ENCODE measurements at regions of chr1 and their contacts with region 1.

Region 1: GRCh38 chr1:26363549-26364448 is 8.8 kb downstream of the ZNF683 start:
- DNase-seq: peak; percentile 57 to 59
- ATAC-seq: peak; percentile 73 to 90; a peak in 5 of 6 replicates
- H3K4me3 ChIP-seq: no peak overlapping the region
- H3K27ac ChIP-seq: peak overlapping the region in 1 of 2 experiments; percentile 47; a peak in 2 of 6 replicates
- H3K4me1 ChIP-seq: peaks cover 8% of the 10 kb centered on the region; the same call in 2 of the 3 replicates
- CTCF ChIP-seq: peak; percentile 81
- EP300 ChIP-seq: no peak
- POLR2A ChIP-seq: no peak
- RAD21 ChIP-seq: peak; percentile 71 to 76

Region 2: DNA sequence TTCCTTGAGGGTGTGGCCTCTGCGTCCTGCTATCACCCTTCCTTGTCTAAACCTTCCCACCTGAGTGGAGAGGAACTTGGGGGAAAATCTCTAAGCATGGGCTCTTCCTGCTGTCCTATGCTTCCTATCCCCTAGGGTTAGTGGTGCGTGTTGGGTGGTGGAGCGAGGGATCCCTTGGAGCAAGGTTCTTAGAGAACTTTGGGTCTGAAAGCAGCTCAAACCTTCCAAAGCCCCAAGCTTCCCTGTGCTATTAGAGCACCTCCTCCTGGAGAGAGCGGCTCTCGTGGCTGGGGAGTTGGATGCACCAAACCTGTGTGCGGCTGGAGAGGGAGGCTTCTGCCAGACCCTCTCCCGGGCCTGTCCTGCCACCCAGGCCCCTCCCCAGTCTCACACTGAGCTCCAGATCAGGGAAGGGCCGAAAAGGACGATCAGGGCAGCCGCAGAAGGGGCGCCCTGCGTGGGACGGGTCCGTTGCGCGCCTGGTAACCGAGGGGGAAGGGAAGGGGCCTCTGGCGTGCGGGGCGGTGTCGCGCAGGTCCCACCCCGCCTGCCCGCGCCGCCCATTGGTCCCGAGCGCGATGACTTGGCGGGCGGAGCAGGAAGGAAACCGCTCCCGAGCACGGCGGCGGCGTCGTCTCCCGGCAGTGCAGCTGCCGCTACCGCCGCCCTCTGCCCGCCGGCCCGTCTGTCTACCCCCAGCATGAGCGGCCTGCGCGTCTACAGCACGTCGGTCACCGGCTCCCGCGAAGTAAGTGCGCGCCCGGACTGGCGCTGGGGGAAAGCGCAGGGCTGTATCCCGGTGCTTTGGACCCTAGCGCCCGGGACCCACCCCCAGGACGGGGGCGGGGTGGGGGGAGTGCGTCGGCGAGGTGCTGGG is 84.1 kb before region 1 on chr1 and contains the start of gene SH3BGRL3:
- CTCF ChIA-PET with region 1: interaction called, 32 read pairs
- POLR2A ChIA-PET with region 1: no interaction called
- DNase-seq: peak; percentile 73 to 75
- ATAC-seq: peak; percentile 82 to 90
- H3K4me3 ChIP-seq: peak within 1 kb of the TSS; percentile 98
- H3K27ac ChIP-seq: peak within 1 kb of the TSS; percentile 99
- H3K4me1 ChIP-seq: peaks cover 50% of the 10 kb centered on the region
- CTCF ChIP-seq: peak; percentile 41
- EP300 ChIP-seq: no peak
- POLR2A ChIP-seq: peak; percentile 77
- RAD21 ChIP-seq: no peak
- polyA plus RNA-seq, gene SH3BGRL3: 36.1 and 38.7 TPM in 2 replicates

Region 3: GRCh38 chr1:26284597-26285360 is 79.0 kb before region 1 on chr1:
- CTCF ChIA-PET with region 1: interaction called, 32 read pairs
- POLR2A ChIA-PET with region 1: no interaction called
- DNase-seq: peak; percentile 64
- ATAC-seq: peak; percentile 67 to 82
- H3K4me3 ChIP-seq: no peak overlapping the region
- H3K27ac ChIP-seq: peak overlapping the region in 1 of 2 experiments; percentile 64; a peak in 3 of 6 replicates
- H3K4me1 ChIP-seq: peaks cover 23% of the 10 kb centered on the region
- CTCF ChIP-seq: peak; percentile 63
- EP300 ChIP-seq: no peak
- POLR2A ChIP-seq: no peak
- RAD21 ChIP-seq: peak; percentile 69

Region 4: DNA sequence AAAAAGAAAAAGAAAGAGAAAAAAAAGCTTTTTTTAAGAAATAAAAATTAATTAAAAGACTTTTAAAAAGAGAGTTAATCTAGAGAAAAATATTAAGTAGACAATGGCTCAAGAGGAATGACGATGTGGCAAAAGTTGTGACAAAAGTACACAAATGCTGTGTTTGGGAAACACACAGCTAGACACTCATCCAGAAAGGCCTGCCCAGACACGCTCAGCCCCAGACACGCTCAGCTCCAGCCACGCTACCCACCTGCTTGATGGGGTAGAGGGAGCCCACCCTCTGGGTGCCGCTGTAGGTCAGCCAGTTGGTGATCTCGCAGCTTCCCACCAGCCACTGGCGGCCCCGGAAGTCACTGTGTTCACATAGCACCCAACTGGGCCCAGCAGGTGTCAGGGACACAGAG is 35.8 kb before region 1 on chr1:
- CTCF ChIA-PET with region 1: interaction called, 20 read pairs
- POLR2A ChIA-PET with region 1: no interaction called
- DNase-seq: no peak
- ATAC-seq: no peak
- H3K4me3 ChIP-seq: no peak overlapping the region
- H3K27ac ChIP-seq: no peak overlapping the region
- H3K4me1 ChIP-seq: peaks cover 6% of the 10 kb centered on the region; the same call in 2 of the 3 replicates
- CTCF ChIP-seq: no peak
- EP300 ChIP-seq: no peak
- POLR2A ChIP-seq: no peak
- RAD21 ChIP-seq: no peak

Region 5: DNA sequence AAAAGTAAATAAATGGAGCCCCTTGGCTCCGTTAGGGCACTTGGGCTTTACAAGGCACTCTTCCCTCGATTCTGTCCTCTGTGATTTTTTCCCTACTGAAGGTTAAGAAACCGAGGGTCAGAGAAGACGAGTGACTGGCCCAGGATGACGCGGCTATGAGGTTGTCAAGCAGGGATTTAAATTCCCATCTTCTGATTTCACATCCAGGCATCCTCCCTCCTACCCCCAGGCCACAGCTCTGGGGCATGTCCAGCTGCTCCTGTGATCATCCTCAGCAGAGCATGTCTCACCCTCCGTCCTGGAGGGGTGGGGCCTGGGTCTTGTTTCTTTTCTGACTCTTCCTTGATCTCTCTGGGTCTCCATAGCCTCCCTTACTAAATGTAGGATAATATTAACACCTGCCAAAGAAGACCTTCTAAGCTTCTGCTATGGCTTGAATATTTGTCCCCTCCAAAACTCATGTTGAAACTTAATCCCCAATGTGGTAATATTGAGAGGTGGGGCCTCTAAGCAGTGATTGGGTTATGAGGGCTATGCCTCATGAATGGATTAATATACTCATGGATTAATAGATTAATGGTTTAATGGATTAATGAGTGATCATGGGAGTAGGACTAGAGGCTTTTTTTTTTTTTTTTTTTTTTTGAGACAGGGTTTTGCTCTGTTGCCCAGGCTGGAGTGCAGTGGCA is 14.5 kb before region 1 on chr1:
- CTCF ChIA-PET with region 1: interaction called, 42 read pairs
- POLR2A ChIA-PET with region 1: no interaction called
- DNase-seq: peak; percentile 33 to 76
- ATAC-seq: peak; percentile 61 to 73
- H3K4me3 ChIP-seq: no peak overlapping the region
- H3K27ac ChIP-seq: peak overlapping the region; percentile 78 to 95
- H3K4me1 ChIP-seq: peaks cover 56% of the 10 kb centered on the region
- CTCF ChIP-seq: no peak
- EP300 ChIP-seq: no peak; a peak in 1 of 5 replicates
- POLR2A ChIP-seq: no peak
- RAD21 ChIP-seq: no peak

Region 6: GRCh38 chr1:26378088-26378878 is 14.5 kb after region 1 on chr1:
- CTCF ChIA-PET with region 1: interaction called, 85 read pairs
- POLR2A ChIA-PET with region 1: no interaction called
- DNase-seq: peak; percentile 64 to 74
- ATAC-seq: peak; percentile 89 to 90
- H3K4me3 ChIP-seq: no peak overlapping the region
- H3K27ac ChIP-seq: peak overlapping the region; percentile 58 to 87
- H3K4me1 ChIP-seq: peaks cover 16% of the 10 kb centered on the region
- CTCF ChIP-seq: no peak
- EP300 ChIP-seq: peak; percentile 14 to 17; a peak in 2 of 5 replicates
- POLR2A ChIP-seq: no peak
- RAD21 ChIP-seq: no peak